ENCODE measurements at regions of chr4 and their contacts with region 1.

Region 1: DNA sequence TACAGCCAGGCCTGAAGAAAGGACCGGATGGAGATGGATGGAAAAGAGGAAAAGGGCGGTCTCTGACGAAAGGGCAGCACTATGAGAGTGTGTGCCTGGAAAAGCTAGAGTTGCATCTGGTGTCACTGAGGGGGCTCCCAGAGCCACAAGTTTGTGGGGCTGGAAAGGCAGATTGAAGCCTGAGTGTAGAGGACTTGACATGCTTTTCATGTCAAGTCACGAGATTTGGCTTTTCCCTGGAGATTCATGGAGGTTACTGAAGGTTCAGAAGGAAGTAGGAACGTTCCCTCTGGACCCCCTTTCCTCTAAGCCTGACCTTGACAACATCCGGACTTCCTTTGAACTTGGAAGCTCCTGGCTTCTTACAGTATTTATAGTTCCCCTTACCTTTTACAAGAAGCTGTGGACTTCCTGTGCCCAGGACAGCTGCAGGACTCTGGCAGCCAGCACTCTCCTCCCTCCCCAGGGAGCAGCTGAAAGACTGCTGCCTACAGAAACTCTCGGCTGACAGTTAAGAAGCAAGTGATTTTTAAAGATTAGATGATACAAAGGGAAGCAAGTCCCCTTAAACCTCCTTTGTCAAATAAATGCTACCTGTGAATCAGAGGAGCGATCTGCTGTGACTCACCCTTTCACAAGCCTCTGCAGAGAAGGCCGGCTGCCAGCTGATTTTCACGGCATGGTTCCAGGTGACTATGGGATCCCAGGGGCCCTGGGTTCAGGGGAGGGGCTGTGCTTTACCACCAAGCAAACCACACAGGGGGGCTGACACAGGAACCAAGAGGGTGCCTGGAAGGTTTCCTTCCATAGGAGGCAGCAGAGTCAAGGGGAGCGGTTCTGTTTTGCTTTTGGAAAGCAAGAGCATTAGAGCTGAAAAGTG is 72.9 kb upstream of the STIM2 start:
- DNase-seq: peak; percentile 62 to 64
- H3K4me3 ChIP-seq: no peak overlapping the region
- H3K27ac ChIP-seq: no peak overlapping the region
- H3K4me1 ChIP-seq: peaks cover 0 to 3% (median 0%) of the 10 kb centered on the region in 4 experiments; a peak in 3 of 7 replicates
- H3K27me3 ChIP-seq: no peaks in the 10 kb centered on the region
- CTCF ChIP-seq: peak; percentile 54 to 72 (median 59)
- EP300 ChIP-seq: no peak
- POLR2A ChIP-seq: no peak
- RAD21 ChIP-seq: peak; percentile 84 to 86

Region 2: GRCh38 chr4:26746802-26747213 is 40.9 kb before region 1 on chr4:
- CTCF ChIA-PET with region 1: no interaction called
- POLR2A ChIA-PET with region 1: no interaction called
- DNase-seq: no peak
- H3K4me3 ChIP-seq: no peak overlapping the region
- H3K27ac ChIP-seq: no peak overlapping the region
- H3K4me1 ChIP-seq: no peaks in the 10 kb centered on the region
- H3K27me3 ChIP-seq: no peaks in the 10 kb centered on the region
- CTCF ChIP-seq: no peak
- EP300 ChIP-seq: no peak
- POLR2A ChIP-seq: no peak
- RAD21 ChIP-seq: no peak

Region 3: DNA sequence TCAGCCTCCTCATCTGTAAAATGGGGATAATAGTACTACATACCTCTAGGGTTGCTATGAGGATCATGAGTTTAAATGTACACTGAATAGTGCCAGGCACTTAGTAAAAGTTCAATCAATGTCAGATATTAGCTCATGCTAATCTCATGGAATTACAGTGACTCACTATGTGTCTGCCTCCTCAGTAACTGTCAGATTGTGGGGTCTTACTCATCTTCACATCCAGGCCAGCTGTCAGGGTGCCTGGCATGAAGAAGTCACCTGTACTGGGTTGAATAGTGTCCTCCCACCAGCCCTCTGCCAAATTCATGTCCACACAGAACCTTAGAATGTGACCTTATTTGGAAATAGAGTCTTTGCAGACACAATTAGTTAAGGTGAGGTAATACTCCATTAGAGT is 18.6 kb after region 1 on chr4:
- CTCF ChIA-PET with region 1: interaction called, 15 read pairs
- POLR2A ChIA-PET with region 1: interaction called, 3 read pairs
- DNase-seq: no peak
- H3K4me3 ChIP-seq: no peak overlapping the region
- H3K27ac ChIP-seq: no peak overlapping the region
- H3K4me1 ChIP-seq: peaks cover 0 to 5% (median 4%) of the 10 kb centered on the region in 4 experiments; a peak in 4 of 7 replicates
- H3K27me3 ChIP-seq: no peaks in the 10 kb centered on the region
- CTCF ChIP-seq: no peak
- EP300 ChIP-seq: no peak
- POLR2A ChIP-seq: no peak
- RAD21 ChIP-seq: no peak

Region 4: DNA sequence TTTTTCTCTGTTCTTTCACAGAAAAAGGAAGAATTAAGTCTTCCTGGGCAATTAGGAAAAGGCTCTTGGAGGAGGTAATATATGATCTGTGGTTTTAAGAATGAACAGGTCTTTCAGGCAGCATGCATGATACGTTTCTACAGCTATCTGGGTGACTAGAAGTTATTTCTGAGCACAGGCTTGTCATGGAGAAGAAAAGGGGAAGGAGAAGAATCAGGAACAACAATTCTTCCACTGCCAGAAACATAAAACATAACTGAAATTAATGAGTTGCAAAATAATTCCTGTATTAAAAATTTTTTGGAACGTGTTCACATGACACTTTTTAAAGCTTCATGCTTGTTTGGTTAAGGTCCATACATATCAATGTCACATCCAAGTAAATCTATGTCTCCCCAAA is 55.2 kb after region 1 on chr4:
- CTCF ChIA-PET with region 1: no interaction called
- POLR2A ChIA-PET with region 1: no interaction called
- DNase-seq: no peak
- H3K4me3 ChIP-seq: no peak overlapping the region
- H3K27ac ChIP-seq: no peak overlapping the region
- H3K4me1 ChIP-seq: no peaks in the 10 kb centered on the region
- H3K27me3 ChIP-seq: no peaks in the 10 kb centered on the region
- CTCF ChIP-seq: no peak
- EP300 ChIP-seq: no peak
- POLR2A ChIP-seq: no peak
- RAD21 ChIP-seq: no peak